Activated naive CD4-positive, alpha-beta T cell treated with anti-CD3 and anti-CD28 coated beads, Interleukin-2, amount 10 ng/mL, durations not matched to agents 7 days and 5 days (primary cell): ENCODE measurements at regions of chr12 and their contacts with region 1.

Region 1: DNA sequence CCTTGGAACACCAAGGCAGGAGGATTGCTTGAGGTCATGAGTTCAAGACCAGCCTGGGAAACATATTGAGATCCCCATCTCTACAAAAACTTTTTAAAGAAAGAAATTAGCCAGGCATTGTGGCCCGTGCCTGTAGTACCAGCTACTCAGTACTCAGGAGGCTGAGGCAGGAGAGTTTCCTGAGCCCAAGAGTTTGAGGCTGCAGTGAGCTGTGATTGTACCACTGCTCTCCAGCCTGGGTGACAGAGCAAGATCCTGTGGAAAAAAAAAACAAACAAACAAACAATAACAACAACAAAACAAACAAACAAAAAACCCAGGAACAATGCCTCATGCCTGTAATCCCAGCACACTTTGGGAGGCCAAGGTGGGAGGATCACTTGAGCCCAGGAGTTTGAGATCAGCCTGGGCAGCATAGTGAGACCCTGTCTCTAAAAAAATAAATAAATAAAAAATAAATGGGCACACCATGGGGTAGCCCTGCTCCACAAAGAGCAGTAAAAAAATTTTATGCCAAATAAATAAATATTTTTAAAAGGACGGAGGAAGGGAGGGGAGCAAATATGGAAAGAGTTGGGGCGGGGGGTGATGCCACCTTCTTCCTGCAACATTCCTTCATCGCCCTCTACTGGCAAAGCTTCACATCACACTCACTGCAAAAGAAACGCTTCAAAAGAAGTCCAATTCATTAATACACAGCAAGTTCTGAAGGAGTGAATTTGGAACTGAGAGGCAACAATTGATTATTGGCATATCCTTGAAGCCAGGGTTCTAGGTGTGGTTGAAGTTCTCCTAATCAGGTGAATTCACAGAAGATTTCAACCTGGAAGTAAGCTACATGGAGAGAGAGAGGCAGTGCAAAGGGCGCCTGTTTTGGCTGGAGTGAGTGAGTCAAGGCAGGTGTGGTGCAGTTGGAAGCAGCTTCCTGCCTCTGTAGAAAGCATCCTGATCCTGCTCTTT is 8.8 kb upstream of the GNPTAB start:
- DNase-seq: peak; percentile 83
- H3K4me3 Mint-ChIP-seq: no peak overlapping the region
- H3K27ac Mint-ChIP-seq: no peak overlapping the region
- H3K4me1 Mint-ChIP-seq: peaks cover 19% of the 10 kb centered on the region
- H3K27me3 Mint-ChIP-seq: peaks cover 16% of the 10 kb centered on the region

Region 2: DNA sequence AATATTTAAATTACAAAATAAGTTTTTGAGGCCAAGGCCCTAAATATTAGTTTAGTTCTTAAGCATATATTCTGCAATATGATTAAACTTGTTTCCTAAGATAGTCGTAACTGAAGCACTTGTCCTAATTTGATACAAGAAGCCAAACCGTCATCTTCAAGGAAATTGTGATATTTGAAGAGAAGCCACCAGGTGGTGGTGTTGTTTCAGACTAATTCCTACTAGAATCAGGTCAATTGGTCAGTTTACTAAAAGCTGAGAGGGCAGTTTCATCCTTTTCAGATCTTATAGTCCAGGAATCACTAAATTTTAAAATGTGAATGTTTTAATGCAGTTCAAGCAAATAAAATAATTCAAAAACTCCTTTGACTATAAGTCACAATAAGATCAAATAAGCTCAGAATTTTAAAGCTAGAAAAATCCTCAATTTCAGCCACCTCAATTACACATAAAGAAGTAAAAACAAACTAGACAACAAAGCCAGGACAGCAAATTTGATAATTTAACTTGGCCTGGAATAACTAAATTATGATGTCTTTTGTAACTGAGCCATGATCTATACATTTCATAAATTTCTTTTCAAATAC is 425.0 kb before region 1 on chr12:
- CTCF ChIA-PET with region 1: interaction called, 12 read pairs
- DNase-seq: peak; percentile 26
- H3K4me3 Mint-ChIP-seq: no peak overlapping the region
- H3K27ac Mint-ChIP-seq: no peak overlapping the region
- H3K4me1 Mint-ChIP-seq: no peaks in the 10 kb centered on the region
- H3K27me3 Mint-ChIP-seq: peaks cover 11% of the 10 kb centered on the region

Region 3: DNA sequence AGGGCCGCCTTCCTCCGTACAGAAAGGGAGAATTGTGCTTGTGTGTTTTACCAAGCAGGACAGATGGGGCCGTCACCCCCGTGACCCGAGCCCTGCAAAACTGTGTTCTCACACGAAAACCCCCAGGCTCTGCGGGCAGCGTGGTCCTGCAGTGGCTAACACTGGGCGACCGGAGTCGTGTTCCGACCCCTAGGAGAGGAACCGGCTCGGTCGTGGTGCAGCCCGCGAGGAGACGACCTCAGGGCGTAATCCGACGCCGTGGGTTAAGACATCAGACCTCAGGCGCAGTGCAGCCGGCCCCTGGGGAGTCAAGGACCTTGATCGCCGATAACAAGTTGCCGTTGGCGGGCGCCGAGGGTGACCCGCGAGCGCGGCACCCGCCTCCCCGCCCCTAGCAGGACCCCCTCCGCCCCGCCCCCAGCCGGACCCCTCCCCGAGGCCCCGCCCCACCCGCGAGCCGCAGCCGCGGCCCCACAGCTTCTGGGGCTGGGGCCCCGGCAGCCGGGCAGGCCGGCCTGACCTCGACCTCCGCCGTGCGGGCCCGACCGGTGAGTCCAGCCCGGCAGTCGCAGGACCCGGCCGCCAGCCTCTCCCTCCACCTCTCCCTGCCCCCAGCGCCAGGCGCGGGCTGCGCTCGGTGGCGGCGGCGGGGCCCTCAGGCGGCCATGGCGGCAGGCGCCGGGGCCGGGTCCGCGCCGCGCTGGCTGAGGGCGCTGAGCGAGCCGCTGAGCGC is 142.2 kb before region 1 on chr12 and contains the start of gene CHPT1:
- CTCF ChIA-PET with region 1: no interaction called
- DNase-seq: peak; percentile 74
- H3K4me3 Mint-ChIP-seq: peak within 1 kb of the TSS; percentile 89
- H3K27ac Mint-ChIP-seq: peak within 1 kb of the TSS; percentile 87
- H3K4me1 Mint-ChIP-seq: peaks cover 31% of the 10 kb centered on the region
- H3K27me3 Mint-ChIP-seq: no peaks in the 10 kb centered on the region

Region 4: GRCh38 chr12:101773650-101774162 is 65.9 kb before region 1 on chr12:
- CTCF ChIA-PET with region 1: interaction called, 151 read pairs
- DNase-seq: peak; percentile 78
- H3K4me3 Mint-ChIP-seq: no peak overlapping the region
- H3K27ac Mint-ChIP-seq: peak overlapping the region; percentile 29
- H3K4me1 Mint-ChIP-seq: peaks cover 31% of the 10 kb centered on the region
- H3K27me3 Mint-ChIP-seq: no peaks in the 10 kb centered on the region

Region 5: DNA sequence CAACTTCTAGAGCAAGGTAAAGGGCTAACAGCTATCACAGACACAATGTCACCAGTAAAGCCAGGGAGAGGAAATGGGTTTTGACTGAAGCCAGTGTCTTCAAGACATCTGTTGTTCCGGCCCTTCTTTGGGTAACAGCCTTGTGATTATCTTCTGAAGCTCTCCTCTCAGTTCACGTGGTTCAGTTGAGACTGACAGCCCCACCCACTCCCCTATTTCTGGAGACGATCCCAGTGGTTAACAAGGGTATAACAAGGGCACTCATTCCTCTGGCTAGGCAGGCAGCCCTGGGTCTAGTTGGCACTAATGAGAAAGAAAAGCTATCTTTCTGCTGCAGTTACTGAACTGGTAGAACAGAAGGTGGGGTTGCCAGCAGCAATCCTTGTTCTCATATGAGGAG is 15.7 kb before region 1 on chr12:
- CTCF ChIA-PET with region 1: interaction called, 11 read pairs
- DNase-seq: peak; percentile 84
- H3K4me3 Mint-ChIP-seq: peak overlapping the region; percentile 22
- H3K27ac Mint-ChIP-seq: peak overlapping the region; percentile 86
- H3K4me1 Mint-ChIP-seq: peaks cover 87% of the 10 kb centered on the region
- H3K27me3 Mint-ChIP-seq: no peaks in the 10 kb centered on the region